MCF 10A (cell line): ENCODE measurements at regions of chr20 and their contacts with region 1.

Region 1: DNA sequence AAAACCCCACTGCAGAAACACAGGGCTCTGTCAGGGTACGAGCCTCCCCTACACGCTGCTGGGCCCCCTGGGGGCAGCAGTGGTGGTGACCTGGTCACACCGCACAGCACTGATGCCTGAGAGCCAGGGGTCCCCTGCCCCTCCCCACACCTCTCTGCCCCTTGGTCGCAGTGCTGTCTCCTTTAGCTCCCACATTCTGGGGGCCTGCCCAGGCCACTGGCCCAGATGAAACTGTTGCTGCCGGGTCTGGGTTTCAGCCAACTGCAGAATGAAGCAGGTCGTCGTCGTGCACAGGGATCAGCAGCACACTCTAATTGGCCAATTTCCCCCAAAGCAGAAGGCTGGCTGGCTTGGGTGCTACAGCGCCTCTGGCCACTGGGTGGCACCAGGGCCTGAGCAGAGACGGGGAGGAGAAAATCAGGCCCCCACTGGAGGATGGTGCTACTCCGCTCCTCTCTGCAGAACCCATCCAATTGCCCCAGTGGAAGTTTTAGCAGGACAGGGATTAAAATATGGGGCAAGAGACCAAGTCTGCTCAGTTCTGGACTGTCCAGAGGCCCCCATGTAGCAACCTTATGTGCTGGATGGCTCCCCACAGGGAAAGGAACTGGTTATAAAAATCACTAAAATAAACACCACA is 26.1 kb downstream of the DIDO1 start:
- DNase-seq: peak; percentile 67
- H3K4me3 Mint-ChIP-seq: no peak overlapping the region
- H3K27ac Mint-ChIP-seq: no peak overlapping the region
- H3K4me1 Mint-ChIP-seq: no peaks in the 10 kb centered on the region
- H3K27me3 Mint-ChIP-seq: no peaks in the 10 kb centered on the region
- CTCF ChIP-seq: peak; percentile 75

Region 2: DNA sequence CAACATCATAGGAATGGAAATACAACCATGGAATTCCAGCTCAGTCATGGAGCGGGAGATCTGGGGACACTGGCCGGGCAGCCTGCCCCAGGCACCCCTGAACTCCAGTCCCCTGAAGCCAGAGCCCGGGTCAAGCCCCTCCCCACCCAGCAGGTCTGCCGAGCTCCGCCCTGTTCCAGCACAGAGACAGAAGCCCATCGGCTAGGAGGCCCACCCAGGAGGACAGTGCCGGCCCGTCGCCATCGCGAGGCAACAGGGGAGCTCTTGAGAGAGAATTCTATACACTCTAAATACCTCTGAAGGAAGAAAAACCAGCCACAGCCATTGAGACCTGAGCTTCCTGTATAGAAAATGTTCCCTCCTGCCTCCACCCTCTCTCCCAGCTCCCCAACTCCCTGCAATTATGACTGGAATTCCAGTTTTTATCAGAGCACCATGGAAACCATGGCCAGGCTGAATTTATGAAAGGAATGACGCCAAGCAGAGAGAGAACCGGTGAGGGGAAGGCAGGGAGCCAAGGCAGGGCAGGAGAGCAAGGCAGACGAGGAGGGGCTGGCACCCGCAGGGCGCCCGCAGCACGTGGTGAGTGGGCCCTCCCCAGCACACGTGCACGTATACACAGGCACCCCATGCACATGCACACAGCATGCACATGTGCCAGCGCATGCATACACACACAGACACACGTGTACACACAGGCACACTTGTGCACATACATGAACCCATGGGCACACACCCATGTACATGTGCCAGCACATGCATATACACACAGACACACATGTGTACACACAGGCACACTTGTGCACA is 131.5 kb before region 1 on chr20:
- CTCF ChIA-PET with region 1: no interaction called
- POLR2A ChIA-PET with region 1: no interaction called
- intact Hi-C with region 1: no loop called
- DNase-seq: no peak
- H3K4me3 Mint-ChIP-seq: no peak overlapping the region
- H3K27ac Mint-ChIP-seq: no peak overlapping the region
- H3K4me1 Mint-ChIP-seq: peaks cover 23% of the 10 kb centered on the region
- H3K27me3 Mint-ChIP-seq: no peaks in the 10 kb centered on the region
- CTCF ChIP-seq: no peak

Region 3: DNA sequence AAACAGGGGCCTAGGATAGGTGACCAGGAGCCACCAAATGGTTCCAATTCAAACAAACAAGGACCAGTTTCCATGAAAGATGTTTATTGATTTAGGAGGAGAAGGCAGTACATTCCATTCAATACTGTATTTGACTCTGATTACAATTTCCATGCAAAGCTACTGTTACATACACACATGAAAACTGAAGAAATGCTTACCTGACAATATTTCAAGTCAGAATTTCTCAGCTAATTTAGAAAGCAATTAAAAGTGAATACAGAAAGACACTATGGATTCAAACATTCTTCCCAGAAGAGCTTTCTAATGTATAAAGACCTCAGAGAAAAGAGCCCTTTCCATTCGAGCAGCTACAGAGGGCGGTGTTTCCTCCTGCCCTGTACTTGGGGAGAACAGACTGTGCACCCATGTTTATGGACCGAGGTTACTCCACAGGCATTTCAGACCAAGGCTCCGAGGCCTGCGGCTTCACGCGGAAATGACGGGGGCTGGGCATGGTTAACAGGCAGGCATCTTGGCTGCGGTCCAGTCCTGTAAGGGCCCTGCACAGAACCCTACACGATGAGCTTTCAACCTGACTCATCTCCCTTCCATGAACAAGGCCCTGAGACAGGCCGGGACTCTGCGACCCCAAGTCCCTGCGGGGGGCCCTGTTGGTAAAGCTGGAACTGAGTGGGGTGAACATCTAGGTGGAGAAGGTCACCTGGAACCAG is 12.9 kb before region 1 on chr20:
- CTCF ChIA-PET with region 1: interaction called, 53 read pairs
- POLR2A ChIA-PET with region 1: interaction called, 11 read pairs
- intact Hi-C with region 1: no loop called
- DNase-seq: no peak
- H3K4me3 Mint-ChIP-seq: no peak overlapping the region
- H3K27ac Mint-ChIP-seq: no peak overlapping the region
- H3K4me1 Mint-ChIP-seq: no peaks in the 10 kb centered on the region
- H3K27me3 Mint-ChIP-seq: no peaks in the 10 kb centered on the region
- CTCF ChIP-seq: no peak

Region 4: DNA sequence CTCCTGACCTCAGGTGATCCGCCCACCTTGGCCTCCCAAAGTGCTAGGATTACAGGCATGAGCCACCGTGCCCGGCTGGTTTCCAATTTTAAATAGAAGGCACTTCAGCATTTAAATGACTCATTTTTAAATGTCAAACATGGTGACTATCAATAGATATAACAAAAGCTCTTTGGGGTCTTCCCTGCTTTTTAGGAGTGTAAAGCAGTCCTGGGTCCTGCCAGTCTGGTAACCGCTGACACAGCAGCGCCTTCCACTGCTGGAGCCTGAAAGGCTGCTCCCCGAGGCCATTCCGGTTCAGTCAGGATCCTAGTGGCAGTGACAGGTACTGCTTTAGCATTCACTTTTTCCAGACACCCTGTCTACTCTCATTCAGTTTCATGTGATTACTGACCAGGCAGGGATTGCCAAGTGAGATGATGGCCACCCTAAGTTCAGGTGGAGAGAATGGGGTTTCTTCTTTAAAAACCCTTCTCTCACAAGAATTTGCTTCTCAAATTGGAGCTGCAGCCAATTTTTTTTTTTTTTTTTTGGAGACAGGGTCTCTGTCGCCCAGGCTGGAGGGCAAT is 21.0 kb after region 1 on chr20:
- CTCF ChIA-PET with region 1: interaction called, 29 read pairs
- POLR2A ChIA-PET with region 1: interaction called, 36 read pairs
- intact Hi-C with region 1: no loop called
- DNase-seq: peak; percentile 79
- H3K4me3 Mint-ChIP-seq: peak overlapping the region; percentile 35
- H3K27ac Mint-ChIP-seq: no peak overlapping the region
- H3K4me1 Mint-ChIP-seq: peaks cover 54% of the 10 kb centered on the region
- H3K27me3 Mint-ChIP-seq: no peaks in the 10 kb centered on the region
- CTCF ChIP-seq: peak; percentile 44

Region 5: DNA sequence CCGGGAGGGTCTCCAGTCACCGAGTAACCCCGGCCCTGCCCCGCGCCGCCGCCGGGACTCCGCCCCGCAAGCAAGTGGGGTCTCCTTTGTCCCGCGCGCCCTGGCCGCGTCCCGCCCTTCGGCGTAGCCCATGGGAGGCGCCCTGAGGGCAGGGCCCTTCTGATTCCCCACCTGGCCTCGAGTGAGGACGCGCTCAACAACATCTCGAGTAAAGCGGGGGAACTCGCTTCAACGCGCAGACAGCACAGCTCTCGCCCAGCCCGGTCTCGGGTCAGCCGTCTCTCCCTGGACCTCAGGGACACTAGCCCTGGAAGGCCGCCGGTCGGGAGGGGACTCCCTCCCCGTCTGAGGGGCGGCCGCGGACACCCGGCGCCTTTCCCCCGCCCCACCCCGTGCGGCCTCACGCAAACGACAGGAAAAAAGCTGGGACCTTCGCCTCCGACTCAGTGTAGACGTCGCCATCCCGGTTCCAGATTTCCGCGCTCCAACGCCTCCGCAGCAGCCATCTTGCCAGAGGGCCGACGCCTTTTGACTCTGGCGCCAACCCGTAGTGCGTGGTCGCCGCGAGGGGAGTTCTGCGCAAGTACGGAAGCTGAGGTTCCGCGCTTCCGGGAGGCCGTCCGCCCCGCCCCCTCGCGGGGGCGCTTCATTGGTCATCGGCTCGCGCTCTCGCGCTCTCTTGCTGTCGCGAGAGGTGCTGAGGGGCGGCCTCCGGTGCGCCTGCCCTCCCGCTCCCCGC is 37.4 kb after region 1 on chr20:
- CTCF ChIA-PET with region 1: interaction called, 9 read pairs
- POLR2A ChIA-PET with region 1: interaction called, 15 read pairs
- intact Hi-C with region 1: no loop called
- DNase-seq: peak; percentile 94
- H3K4me3 Mint-ChIP-seq: no peak overlapping the region
- H3K27ac Mint-ChIP-seq: peak overlapping the region; percentile 97
- H3K4me1 Mint-ChIP-seq: peaks cover 15% of the 10 kb centered on the region
- H3K27me3 Mint-ChIP-seq: no peaks in the 10 kb centered on the region
- CTCF ChIP-seq: no peak

Region 6: DNA sequence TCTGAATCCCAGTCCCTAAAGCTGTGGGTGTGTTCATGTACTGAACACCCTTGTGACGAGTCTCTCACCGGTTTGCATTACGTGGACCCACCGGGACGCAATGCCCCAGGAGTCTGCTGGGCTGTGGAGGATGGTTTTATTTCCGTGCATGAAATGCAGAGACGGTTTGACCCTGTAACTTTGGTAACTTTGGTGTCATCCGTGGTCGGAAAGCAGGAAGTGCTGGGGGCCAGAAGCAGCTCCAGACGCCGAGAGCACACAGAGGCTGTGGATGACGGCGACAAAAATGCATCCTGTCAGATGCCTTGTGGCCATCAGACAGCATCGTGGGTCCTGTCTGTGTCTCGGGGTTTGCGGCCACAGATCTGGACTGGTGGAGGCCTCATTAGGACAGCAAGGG is 99.4 kb after region 1 on chr20:
- CTCF ChIA-PET with region 1: no interaction called
- POLR2A ChIA-PET with region 1: no interaction called
- intact Hi-C with region 1: no loop called
- DNase-seq: no peak
- H3K4me3 Mint-ChIP-seq: no peak overlapping the region
- H3K27ac Mint-ChIP-seq: no peak overlapping the region
- H3K4me1 Mint-ChIP-seq: no peaks in the 10 kb centered on the region
- H3K27me3 Mint-ChIP-seq: peaks cover 92% of the 10 kb centered on the region
- CTCF ChIP-seq: no peak